ENCODE measurements at regions of chr12 and their contacts with region 1.

Region 1: GRCh38 chr12:61188801-61189595 is 1071.2 kb upstream of the USP15 start:
- DNase-seq: no peak
- H3K4me3 Mint-ChIP-seq: no peak overlapping the region
- H3K27ac Mint-ChIP-seq: no peak overlapping the region
- H3K4me1 Mint-ChIP-seq: no peaks in the 10 kb centered on the region
- H3K27me3 Mint-ChIP-seq: no peaks in the 10 kb centered on the region

Region 2: DNA sequence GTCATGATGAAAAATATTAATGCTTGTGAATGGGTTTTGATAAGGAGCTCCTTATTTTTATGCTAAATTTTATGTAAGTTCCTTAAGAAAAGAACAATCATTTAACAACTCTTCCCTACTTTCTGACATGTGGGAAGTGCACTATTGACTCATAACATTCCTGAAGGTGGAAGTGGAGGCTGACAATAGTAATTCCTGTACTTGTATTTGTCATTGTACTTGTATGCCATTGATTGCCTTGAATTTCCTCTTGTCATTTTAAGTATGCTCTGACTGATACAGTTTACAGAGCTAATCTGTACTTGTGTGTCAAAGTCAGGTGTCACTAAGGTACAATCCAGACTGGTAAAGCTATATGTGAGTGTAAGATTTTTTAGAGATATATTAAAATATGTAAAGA is 1153.2 kb before region 1 on chr12:
- CTCF ChIA-PET with region 1: no interaction called
- intact Hi-C with region 1: loop called (anchors 5 kb)
- DNase-seq: no peak
- H3K4me3 Mint-ChIP-seq: no peak overlapping the region
- H3K27ac Mint-ChIP-seq: no peak overlapping the region
- H3K4me1 Mint-ChIP-seq: no peaks in the 10 kb centered on the region
- H3K27me3 Mint-ChIP-seq: no peaks in the 10 kb centered on the region

Region 3: DNA sequence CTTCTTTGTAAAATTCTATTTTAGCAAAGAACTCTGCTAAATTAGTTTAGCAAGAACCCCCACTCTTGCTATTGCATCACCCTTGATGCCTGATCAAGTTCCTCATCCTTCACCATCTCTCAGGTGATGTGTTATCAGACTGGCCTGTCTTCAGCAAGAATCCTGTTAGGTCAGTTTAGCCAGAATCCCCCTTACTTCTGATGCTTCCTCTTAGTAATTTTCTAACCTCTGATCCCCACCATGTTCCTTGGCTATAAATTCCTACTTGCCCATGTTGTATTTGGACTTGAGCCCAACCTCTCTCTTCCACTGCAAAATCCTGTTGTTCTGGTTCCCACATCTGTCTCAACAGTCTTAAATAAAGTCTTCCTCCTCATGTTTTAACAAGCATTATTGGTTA is 83.4 kb after region 1 on chr12:
- CTCF ChIA-PET with region 1: no interaction called
- intact Hi-C with region 1: no loop called
- DNase-seq: no peak
- H3K4me3 Mint-ChIP-seq: no peak overlapping the region
- H3K27ac Mint-ChIP-seq: no peak overlapping the region
- H3K4me1 Mint-ChIP-seq: no peaks in the 10 kb centered on the region
- H3K27me3 Mint-ChIP-seq: no peaks in the 10 kb centered on the region

Measured in activated naive CD4-positive, alpha-beta T cell treated with anti-CD3 and anti-CD28 coated beads for 36 hours (primary cell).